GM12878 (cell line): ENCODE measurements at regions of chr15 and their contacts with region 1.

Region 1: DNA sequence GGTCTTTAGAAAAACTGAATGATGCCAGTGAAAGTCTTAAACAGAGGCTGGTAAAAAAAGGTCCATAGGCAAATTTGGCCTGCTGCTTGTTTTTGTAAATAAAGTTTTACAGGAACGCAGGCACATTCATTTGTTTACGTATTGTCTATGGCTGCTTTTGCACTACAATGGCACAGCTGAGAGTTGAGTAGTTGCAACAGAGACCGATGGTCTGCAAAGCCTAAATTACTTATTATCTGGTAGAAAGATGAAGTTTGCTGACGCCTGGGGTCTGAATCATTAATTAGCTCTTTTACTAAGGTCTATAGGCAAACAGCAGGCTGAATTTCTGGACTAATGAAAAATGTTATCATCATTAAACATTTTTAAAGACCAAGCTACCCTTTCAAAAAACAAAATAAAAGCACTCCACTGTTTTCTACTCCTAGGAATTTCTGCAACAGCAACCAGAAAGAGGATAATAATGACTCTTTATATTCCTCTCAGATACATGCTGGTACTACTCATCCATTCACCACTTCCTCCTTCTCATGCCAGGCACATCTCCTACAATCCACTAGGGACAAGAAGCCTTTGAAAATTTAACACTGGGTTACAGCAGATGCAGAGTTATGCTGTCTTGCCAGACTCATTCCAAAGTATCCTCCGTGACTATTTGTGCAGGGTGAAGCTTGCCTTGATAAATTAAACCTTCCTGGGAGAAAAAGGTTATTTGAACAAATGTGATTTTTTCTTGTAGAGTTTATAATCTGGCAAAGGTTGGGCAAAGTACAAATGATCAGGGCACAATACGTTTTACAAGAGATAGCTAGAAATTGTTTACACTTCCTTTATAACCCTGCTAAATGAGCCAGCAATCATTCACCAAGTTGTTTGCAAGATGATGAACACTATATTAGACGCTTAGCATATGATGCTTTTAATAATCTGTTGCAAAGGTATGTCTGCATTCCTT is 6.0 kb downstream of the GATM start:
- DNase-seq: no peak
- ATAC-seq: peak; percentile 48; the same call in 2 of the 3 replicates
- H3K4me3 ChIP-seq: no peak overlapping the region
- H3K27ac ChIP-seq: no peak overlapping the region
- H3K4me1 ChIP-seq: no peaks in the 10 kb centered on the region
- H3K27me3 ChIP-seq: no peaks in the 10 kb centered on the region
- CTCF ChIP-seq: no peak
- EP300 ChIP-seq: no peak
- POLR2A ChIP-seq: no peak
- RAD21 ChIP-seq: no peak

Region 2: GRCh38 chr15:45361878-45362277 is 10.4 kb before region 1 on chr15:
- CTCF ChIA-PET with region 1: interaction called, 5 read pairs
- POLR2A ChIA-PET with region 1: interaction called, 7 read pairs
- RAD21 ChIA-PET with region 1: no interaction called
- SMC1A ChIA-PET with region 1: interaction called, 14 read pairs
- in situ Hi-C with region 1: no loop called
- intact Hi-C with region 1: no loop called
- DNase-seq: no peak
- ATAC-seq: no peak
- H3K4me3 ChIP-seq: no peak overlapping the region
- H3K27ac ChIP-seq: no peak overlapping the region
- H3K4me1 ChIP-seq: no peaks in the 10 kb centered on the region
- H3K27me3 ChIP-seq: no peaks in the 10 kb centered on the region
- CTCF ChIP-seq: no peak
- EP300 ChIP-seq: no peak
- POLR2A ChIP-seq: no peak
- RAD21 ChIP-seq: no peak

Region 3: DNA sequence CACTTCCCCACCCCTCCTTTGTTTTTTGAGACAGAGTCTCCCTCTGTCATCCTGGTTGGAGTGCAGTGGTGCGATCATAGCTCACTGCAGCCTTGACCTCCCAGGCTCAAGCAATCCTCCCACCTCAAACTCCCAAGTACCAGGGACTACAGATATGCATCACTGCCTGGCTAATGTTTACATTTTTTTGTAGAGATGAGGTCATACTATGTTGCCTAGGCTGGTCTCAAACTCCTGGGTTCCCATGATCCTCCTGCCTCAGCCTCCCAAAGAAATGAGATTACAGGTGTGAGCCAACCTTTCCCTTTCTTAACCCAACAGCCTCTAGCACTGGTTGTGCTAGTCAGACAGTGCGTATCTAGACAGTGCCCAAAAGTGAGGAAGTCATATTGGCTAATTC is 12.4 kb after region 1 on chr15:
- CTCF ChIA-PET with region 1: interaction called, 18 read pairs
- POLR2A ChIA-PET with region 1: interaction called, 5 read pairs
- RAD21 ChIA-PET with region 1: interaction called, 3 read pairs
- SMC1A ChIA-PET with region 1: interaction called, 19 read pairs
- in situ Hi-C with region 1: no loop called
- intact Hi-C with region 1: no loop called
- DNase-seq: no peak
- ATAC-seq: no peak
- H3K4me3 ChIP-seq: no peak overlapping the region
- H3K27ac ChIP-seq: no peak overlapping the region
- H3K4me1 ChIP-seq: no peaks in the 10 kb centered on the region
- H3K27me3 ChIP-seq: no peaks in the 10 kb centered on the region
- CTCF ChIP-seq: no peak
- EP300 ChIP-seq: no peak
- POLR2A ChIP-seq: no peak
- RAD21 ChIP-seq: no peak

Region 4: GRCh38 chr15:45429974-45430792 is 57.9 kb after region 1 on chr15:
- CTCF ChIA-PET with region 1: no interaction called
- POLR2A ChIA-PET with region 1: no interaction called
- RAD21 ChIA-PET with region 1: no interaction called
- SMC1A ChIA-PET with region 1: no interaction called
- in situ Hi-C with region 1: no loop called
- intact Hi-C with region 1: no loop called
- DNase-seq: no peak
- ATAC-seq: peak; percentile 98
- H3K4me3 ChIP-seq: peak overlapping the region; percentile 61; the same call in 1 of the 2 replicates
- H3K27ac ChIP-seq: no peak overlapping the region
- H3K4me1 ChIP-seq: 0 out of 2 replicates have a peak, but pooled peaks cover 3% of the 10 kb centered on the region
- H3K27me3 ChIP-seq: no peaks in the 10 kb centered on the region
- CTCF ChIP-seq: peak; percentile 99 to 100 (median 99)
- EP300 ChIP-seq: no peak
- POLR2A ChIP-seq: no peak
- RAD21 ChIP-seq: peak; percentile 79

Region 5: DNA sequence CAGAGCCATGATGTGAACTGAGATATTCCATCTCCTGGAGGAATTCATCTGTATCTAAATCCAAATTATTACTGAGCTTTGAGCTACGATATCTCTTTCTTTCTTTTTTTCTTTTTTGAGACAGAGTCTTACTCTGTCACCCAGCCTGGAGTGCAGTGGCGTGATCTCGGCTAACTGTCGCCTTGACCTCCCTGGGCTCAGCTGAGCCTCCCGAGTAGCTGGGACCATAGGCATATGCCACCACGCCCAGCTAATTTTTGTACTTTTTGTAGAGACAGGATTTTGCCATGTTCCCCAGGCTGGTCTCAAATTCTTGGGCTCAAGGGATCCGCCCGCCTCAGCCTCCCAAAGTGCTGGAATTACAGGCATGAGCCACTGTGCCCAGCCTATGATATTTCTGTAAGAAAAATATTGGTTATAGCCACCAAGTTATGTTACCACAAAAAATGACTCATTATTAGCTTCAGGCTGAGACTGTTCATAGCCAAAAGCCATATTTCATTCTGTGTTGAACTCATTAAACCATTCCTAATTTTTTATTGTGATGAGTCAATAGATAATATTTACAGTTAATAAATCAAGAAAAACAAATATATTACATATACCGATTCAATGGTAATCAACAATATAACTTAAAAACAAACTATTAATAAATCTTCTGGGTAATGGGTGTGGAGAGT is 177.4 kb after region 1 on chr15:
- CTCF ChIA-PET with region 1: no interaction called
- POLR2A ChIA-PET with region 1: no interaction called
- RAD21 ChIA-PET with region 1: no interaction called
- SMC1A ChIA-PET with region 1: no interaction called
- in situ Hi-C with region 1: no loop called
- intact Hi-C with region 1: no loop called
- DNase-seq: no peak
- ATAC-seq: no peak
- H3K4me3 ChIP-seq: no peak overlapping the region
- H3K27ac ChIP-seq: no peak overlapping the region
- H3K4me1 ChIP-seq: no peaks in the 10 kb centered on the region
- H3K27me3 ChIP-seq: no peaks in the 10 kb centered on the region
- CTCF ChIP-seq: no peak
- EP300 ChIP-seq: no peak
- POLR2A ChIP-seq: no peak
- RAD21 ChIP-seq: no peak